ENCODE measurements at regions of chr7 and their contacts with region 1.

Region 1: GRCh38 chr7:80699045-80699638 is 60.7 kb downstream of the CD36 start:
- DNase-seq: no peak
- H3K4me3 ChIP-seq: no peak overlapping the region
- H3K27ac ChIP-seq: no peak overlapping the region
- H3K27me3 ChIP-seq: no peaks in the 10 kb centered on the region
- CTCF ChIP-seq: peak; percentile 58

Region 2: GRCh38 chr7:80815733-80816132 is 116.6 kb after region 1 on chr7:
- CTCF ChIA-PET with region 1: no interaction called
- POLR2A ChIA-PET with region 1: no interaction called
- DNase-seq: no peak
- H3K4me3 ChIP-seq: no peak overlapping the region
- H3K27ac ChIP-seq: no peak overlapping the region
- H3K27me3 ChIP-seq: no peaks in the 10 kb centered on the region
- CTCF ChIP-seq: no peak

Region 3: GRCh38 chr7:81457852-81458522 is 758.8 kb after region 1 on chr7:
- CTCF ChIA-PET with region 1: interaction called, 31 read pairs
- POLR2A ChIA-PET with region 1: no interaction called
- DNase-seq: no peak
- H3K4me3 ChIP-seq: no peak overlapping the region
- H3K27ac ChIP-seq: no peak overlapping the region
- H3K27me3 ChIP-seq: no peaks in the 10 kb centered on the region
- CTCF ChIP-seq: peak; percentile 58

Region 4: DNA sequence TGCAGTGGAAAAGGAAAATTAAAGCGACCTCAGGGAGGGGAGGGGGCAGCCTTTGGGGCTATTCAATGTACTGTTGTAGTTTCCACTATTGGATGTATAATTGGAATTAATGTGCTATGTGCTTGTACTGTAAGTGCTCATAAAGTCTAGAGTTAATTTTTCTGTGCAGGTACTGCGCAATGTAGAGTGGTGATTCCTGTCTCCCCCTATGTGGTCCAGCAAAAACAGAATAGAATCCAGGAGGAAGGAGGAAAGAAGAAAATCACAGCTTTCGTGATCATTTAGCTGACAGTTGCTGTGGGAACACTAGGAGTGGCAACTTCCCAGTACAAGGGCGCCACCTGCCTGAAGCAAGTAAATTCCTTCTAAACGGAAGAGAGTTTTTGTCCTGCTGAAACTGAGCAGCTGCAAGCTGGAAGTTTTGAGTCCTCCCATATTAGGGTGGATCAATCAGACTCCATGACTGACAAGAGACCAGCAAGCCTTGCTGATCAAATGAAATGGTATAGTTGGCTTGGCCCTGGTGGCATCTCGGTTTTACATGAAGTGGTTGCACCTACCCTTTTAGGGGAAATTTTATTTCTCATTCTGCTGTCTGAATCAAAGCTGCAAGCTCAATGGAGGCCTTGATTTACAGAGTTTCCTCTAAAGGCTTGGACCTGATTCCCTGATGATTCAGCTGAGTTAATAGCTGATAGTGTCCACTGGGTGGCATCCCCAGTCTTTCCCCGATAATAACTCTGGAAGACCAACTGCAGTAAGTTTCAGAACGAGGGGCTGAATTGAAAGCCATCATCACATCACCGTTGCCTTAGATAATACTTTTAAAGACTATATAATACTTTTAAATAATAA is 771.0 kb after region 1 on chr7:
- CTCF ChIA-PET with region 1: interaction called, 59 read pairs
- POLR2A ChIA-PET with region 1: no interaction called
- DNase-seq: peak; percentile 58
- H3K4me3 ChIP-seq: no peak overlapping the region
- H3K27ac ChIP-seq: no peak overlapping the region
- H3K27me3 ChIP-seq: no peaks in the 10 kb centered on the region
- CTCF ChIP-seq: peak; percentile 79